ENCODE measurements at regions of chr3 and their contacts with region 1.

Region 1: GRCh38 chr3:186108941-186109865 is at the start of gene ETV5:
- DNase-seq: peak; percentile 99 to 100
- H3K4me3 ChIP-seq: peak within 1 kb of the TSS; percentile 63 to 65
- H3K27ac ChIP-seq: peak within 1 kb of the TSS; percentile 74
- H3K4me1 ChIP-seq: peaks cover 29% of the 10 kb centered on the region
- H3K27me3 ChIP-seq: no peaks in the 10 kb centered on the region
- CTCF ChIP-seq: no peak
- POLR2A ChIP-seq: peak; percentile 70 to 79
- total RNA-seq, gene ETV5: 18.4 TPM

Region 2: GRCh38 chr3:186162221-186162620 is 53.0 kb after region 1 on chr3:
- intact Hi-C with region 1: no loop called
- DNase-seq: peak; percentile 12 to 42
- H3K4me3 ChIP-seq: no peak overlapping the region
- H3K27ac ChIP-seq: no peak overlapping the region
- H3K4me1 ChIP-seq: no peaks in the 10 kb centered on the region
- H3K27me3 ChIP-seq: no peaks in the 10 kb centered on the region
- CTCF ChIP-seq: no peak
- POLR2A ChIP-seq: no peak

Region 3: DNA sequence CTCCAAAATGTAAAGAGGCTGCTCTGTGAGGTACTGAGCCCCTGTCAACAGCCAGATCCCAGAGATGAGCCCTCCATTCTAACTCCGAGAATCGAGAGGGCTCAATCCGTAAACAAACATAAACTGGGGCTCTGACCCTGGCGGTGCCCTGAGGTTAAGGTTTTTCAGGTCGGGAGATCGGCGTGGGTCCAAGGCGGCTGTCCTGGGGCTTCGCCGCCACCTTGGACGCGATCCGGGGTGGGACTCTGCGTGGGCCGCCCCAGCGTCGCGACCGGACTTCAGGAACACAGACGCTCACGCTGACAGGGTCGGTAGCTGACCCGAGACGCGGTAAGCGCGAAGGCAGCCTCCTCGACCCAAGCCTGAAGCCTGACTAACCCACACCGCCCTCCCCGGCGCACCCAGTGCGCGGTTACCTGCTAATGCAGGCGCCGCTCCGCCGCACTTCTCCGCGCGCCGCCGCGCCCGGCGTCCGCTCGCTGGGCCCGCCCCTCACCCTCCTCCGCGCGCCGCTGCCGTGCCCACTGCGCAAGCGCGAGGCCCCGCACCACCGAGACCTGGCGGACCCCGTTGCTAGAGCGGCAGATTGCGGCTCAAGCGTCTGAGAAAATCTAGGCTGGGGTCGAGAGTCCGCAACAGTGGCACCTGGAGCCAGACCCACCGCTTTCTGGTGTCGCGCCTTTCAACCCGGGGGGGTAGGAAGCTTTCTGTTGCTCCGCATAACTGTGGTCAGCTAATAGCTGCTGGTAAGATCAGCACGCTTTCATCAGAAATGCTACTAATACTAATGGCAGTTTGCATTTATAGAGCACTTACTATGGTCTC is 457.9 kb after region 1 on chr3 and contains the start of gene TBCCD1:
- intact Hi-C with region 1: loop called (anchors 10 kb)
- DNase-seq: peak in 1 of 2 donors; percentile 90
- H3K4me3 ChIP-seq: peak within 1 kb of the TSS; percentile 66 to 80
- H3K27ac ChIP-seq: peak within 1 kb of the TSS; percentile 77
- H3K4me1 ChIP-seq: peaks cover 68% of the 10 kb centered on the region
- H3K27me3 ChIP-seq: no peaks in the 10 kb centered on the region
- CTCF ChIP-seq: no peak
- POLR2A ChIP-seq: peak in 1 of 2 donors; percentile 89
- total RNA-seq, gene TBCCD1: 10.6 TPM